Sigmoid colon (tissue), 7 donors: ENCODE measurements at regions of chr9 and their contacts with region 1.

Region 1: GRCh38 chr9:1285514-1285913 is 235.4 kb downstream of the DMRT2 start:
- DNase-seq: no peak
- H3K4me3 ChIP-seq: no peak overlapping the region
- H3K27ac ChIP-seq: no peak overlapping the region
- H3K4me1 ChIP-seq: no peaks in the 10 kb centered on the region
- H3K27me3 ChIP-seq: no peaks in the 10 kb centered on the region
- CTCF ChIP-seq: no peak
- EP300 ChIP-seq: no peak
- POLR2A ChIP-seq: no peak

Region 2: DNA sequence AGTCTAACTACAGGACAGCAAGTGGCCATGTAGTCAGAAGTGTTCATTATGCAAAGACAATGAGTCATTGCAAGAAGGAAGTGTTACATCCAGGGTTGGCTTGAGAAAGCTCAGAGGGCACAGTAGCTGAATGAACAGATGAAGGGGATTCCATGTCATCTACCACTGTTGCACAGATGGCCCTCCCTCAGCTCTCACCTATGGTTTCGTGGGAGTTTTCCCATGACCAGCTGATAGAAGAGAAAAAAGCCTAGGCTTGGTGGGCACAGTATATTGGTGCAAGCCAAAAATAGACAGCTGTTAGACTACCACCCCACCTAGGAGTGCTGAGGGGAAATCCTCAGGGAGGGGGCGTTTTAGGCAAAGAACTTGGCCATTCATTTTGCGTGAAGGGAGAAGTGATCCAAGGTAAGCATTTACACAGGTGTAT is 18.4 kb before region 1 on chr9:
- intact Hi-C with region 1: no loop called
- DNase-seq: no peak
- H3K4me3 ChIP-seq: no peak overlapping the region
- H3K27ac ChIP-seq: no peak overlapping the region
- H3K4me1 ChIP-seq: no peaks in the 10 kb centered on the region
- H3K27me3 ChIP-seq: no peaks in the 10 kb centered on the region
- CTCF ChIP-seq: no peak
- EP300 ChIP-seq: no peak
- POLR2A ChIP-seq: no peak

Region 3: GRCh38 chr9:1303932-1304331 is 18.4 kb after region 1 on chr9:
- intact Hi-C with region 1: loop called (anchors 2 kb)
- DNase-seq: no peak
- H3K4me3 ChIP-seq: no peak overlapping the region
- H3K27ac ChIP-seq: no peak overlapping the region
- H3K4me1 ChIP-seq: no peaks in the 10 kb centered on the region
- H3K27me3 ChIP-seq: no peaks in the 10 kb centered on the region
- CTCF ChIP-seq: no peak
- EP300 ChIP-seq: no peak
- POLR2A ChIP-seq: no peak